Activated T-helper 2 cell treated with anti-CD3 and anti-CD28 coated beads, Interferon-gamma antibody, Interleukin-2, Interleukin-4, amounts not matched to agents 10 μg/mL and 5 μg/mL and 100 μg/mL, durations not matched to agents 14 hours and 24 hours and 36 hours (primary cell): ENCODE measurements at regions of chr7 and their contacts with region 1.

Region 1: DNA sequence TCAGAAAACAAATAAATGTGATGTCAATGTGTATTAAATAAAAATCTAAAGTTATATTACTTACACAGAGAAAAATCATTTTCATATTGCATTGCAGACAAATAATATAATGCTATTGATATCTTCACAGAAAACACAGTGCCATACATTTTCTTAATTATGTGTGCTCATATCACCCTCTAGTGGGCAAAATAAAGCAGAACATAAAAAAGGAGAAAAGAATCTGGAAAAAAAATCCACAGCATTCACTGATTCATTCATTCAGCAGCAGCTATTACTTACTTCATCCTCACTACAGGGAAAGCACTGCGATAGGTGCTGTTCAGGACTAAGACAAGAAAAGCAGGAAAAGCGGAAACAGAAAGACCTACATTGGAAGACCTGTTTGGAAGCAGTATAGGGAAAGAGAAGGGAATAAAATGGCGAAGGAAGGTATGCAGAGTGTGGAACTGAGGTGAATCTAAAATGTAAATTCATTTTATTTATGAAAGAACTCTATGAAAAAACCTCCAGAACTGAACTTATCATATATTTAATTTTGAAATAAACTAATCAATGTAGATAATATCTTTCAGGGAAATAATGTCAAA is 73.2 kb downstream of the POT1 start:
- DNase-seq: no peak
- H3K4me3 Mint-ChIP-seq: no peak overlapping the region
- H3K27ac Mint-ChIP-seq: no peak overlapping the region
- H3K4me1 Mint-ChIP-seq: no peaks in the 10 kb centered on the region
- H3K27me3 Mint-ChIP-seq: no peaks in the 10 kb centered on the region

Region 2: DNA sequence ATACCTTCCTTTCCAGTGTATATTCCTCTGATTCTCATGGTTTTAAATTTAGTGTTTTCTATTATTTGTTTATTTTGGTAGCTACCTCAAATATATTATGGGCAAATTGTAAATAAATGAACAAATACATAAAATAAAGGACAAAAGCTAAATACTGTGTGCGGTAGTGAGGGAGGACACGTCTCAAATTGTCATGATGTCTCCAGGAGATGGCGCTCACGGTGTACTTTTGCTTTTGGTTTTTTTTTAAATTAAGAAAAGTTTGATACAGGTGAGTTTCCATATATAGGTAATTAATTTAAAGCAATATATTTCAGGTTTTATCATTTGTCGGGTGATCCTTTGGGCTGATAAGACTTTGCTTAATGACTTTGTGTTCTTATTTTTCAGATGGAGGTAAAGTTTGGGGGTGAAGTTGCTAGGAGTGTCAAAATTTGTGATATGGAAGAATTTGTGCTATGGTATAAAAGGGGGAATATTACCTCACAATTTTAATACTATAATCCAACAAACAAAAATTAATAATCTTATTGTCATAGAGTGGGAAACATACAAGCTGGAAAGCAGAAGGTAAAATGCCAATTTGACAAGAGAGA is 755.1 kb before region 1 on chr7:
- intact Hi-C with region 1: loop called (anchors 10 kb)
- DNase-seq: no peak
- H3K4me3 Mint-ChIP-seq: no peak overlapping the region
- H3K27ac Mint-ChIP-seq: no peak overlapping the region
- H3K4me1 Mint-ChIP-seq: no peaks in the 10 kb centered on the region
- H3K27me3 Mint-ChIP-seq: no peaks in the 10 kb centered on the region